Mammary epithelial cell (primary cell): ENCODE measurements at regions of chr2 and their contacts with region 1.

Region 1: GRCh38 chr2:219177552-219178376 is at the start of gene RETREG2:
- DNase-seq: peak; percentile 87
- H3K4me3 ChIP-seq: peak within 1 kb of the TSS; percentile 83 to 89 (median 86)
- H3K27ac ChIP-seq: peak within 1 kb of the TSS; percentile 92
- H3K4me1 ChIP-seq: peaks cover 28% of the 10 kb centered on the region
- H3K27me3 ChIP-seq: no peaks in the 10 kb centered on the region
- CTCF ChIP-seq: peak; percentile 22 to 38
- total RNA-seq, gene RETREG2: 56.1 to 73.5 TPM

Region 2: DNA sequence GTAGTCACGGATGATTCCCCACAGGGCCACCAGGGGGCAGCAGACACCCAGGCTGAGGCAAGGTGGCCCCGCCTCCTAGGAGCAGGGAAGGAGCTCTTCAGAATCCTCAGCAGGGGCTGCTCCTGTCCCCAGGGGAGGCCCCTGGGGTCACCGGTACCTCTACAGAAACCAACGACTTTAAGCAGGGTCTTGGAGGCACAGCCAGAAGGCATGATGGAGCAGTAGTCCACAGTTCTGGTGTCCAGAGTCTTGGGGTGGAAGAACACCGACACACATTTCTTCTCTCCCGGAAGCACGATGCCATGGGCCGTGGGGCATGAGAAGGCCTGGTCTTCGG is 148.0 kb before region 1 on chr2:
- CTCF ChIA-PET with region 1: no interaction called
- dilution Hi-C with region 1: no loop called
- in situ Hi-C with region 1: no loop called
- intact Hi-C with region 1: no loop called
- DNase-seq: peak; percentile 43
- H3K4me3 ChIP-seq: no peak overlapping the region
- H3K27ac ChIP-seq: no peak overlapping the region
- H3K4me1 ChIP-seq: no peaks in the 10 kb centered on the region
- H3K27me3 ChIP-seq: peaks cover 3% of the 10 kb centered on the region
- CTCF ChIP-seq: peak; percentile 90 to 97

Region 3: GRCh38 chr2:219160186-219161017 is 17.4 kb before region 1 on chr2 and contains the start of gene NHEJ1:
- CTCF ChIA-PET with region 1: no interaction called
- dilution Hi-C with region 1: no loop called
- in situ Hi-C with region 1: no loop called
- intact Hi-C with region 1: loop called (anchors 1 kb)
- DNase-seq: peak; percentile 88
- H3K4me3 ChIP-seq: peak within 1 kb of the TSS; percentile 74 to 91 (median 79)
- H3K27ac ChIP-seq: peak within 1 kb of the TSS; percentile 19
- H3K4me1 ChIP-seq: peaks cover 15% of the 10 kb centered on the region
- H3K27me3 ChIP-seq: no peaks in the 10 kb centered on the region
- CTCF ChIP-seq: peak; percentile 84 to 96
- total RNA-seq, gene NHEJ1: 10.4 to 13.3 TPM

Region 4: GRCh38 chr2:219206442-219207253 is 28.9 kb after region 1 on chr2 and contains the start of gene ZFAND2B:
- CTCF ChIA-PET with region 1: no interaction called
- dilution Hi-C with region 1: no loop called
- in situ Hi-C with region 1: loop called in 1 of 2 experiments (anchors 5 kb)
- intact Hi-C with region 1: loop called (anchors 1 kb)
- DNase-seq: peak; percentile 93
- H3K4me3 ChIP-seq: peak within 1 kb of the TSS; percentile 62 to 88 (median 74)
- H3K27ac ChIP-seq: peak within 1 kb of the TSS; percentile 36
- H3K4me1 ChIP-seq: peaks cover 17% of the 10 kb centered on the region
- H3K27me3 ChIP-seq: no peaks in the 10 kb centered on the region
- CTCF ChIP-seq: no peak
- total RNA-seq, gene ZFAND2B: 23.7 to 33.8 TPM

Region 5: GRCh38 chr2:219229305-219230058 is 51.7 kb after region 1 on chr2 and contains the starts of genes ANKZF1 and ATG9A:
- CTCF ChIA-PET with region 1: no interaction called
- dilution Hi-C with region 1: no loop called
- in situ Hi-C with region 1: no loop called
- intact Hi-C with region 1: loop called (anchors 1 kb)
- DNase-seq: peak; percentile 100
- H3K4me3 ChIP-seq: peak within 1 kb of the TSS; percentile 79 to 94 (median 92)
- H3K27ac ChIP-seq: peak within 1 kb of the TSS; percentile 93
- H3K4me1 ChIP-seq: peaks cover 17% of the 10 kb centered on the region
- H3K27me3 ChIP-seq: no peaks in the 10 kb centered on the region
- CTCF ChIP-seq: no peak
- total RNA-seq, gene ANKZF1: 29.2 to 52.9 TPM
- total RNA-seq, gene ATG9A: 60.4 to 74.5 TPM

Region 6: DNA sequence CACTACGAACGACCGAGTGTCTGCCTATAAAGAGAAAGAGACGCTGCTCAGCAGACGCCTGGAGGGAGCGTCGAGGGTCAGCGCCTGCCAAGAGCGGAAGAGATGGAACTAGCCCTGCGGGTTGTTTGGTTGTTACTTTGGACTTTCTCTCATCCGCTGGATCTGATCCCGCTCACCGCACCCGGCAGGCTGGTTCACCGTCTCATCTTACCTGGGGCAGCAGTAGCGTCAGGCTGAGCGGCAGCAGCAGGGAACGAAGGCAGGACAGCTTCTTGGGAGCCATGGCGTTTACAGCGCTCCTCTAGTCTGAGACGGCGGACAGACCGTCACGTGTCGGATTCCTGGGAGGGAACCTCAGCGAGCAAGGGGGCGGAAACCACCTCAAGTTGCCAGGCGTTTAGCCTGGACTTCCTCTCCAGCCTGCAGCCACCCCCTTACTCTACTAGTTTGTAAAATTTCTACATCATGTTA is 65.6 kb after region 1 on chr2:
- CTCF ChIA-PET with region 1: no interaction called
- dilution Hi-C with region 1: no loop called
- in situ Hi-C with region 1: no loop called
- intact Hi-C with region 1: no loop called
- DNase-seq: no peak
- H3K4me3 ChIP-seq: peak overlapping the region in 1 of 3 experiments; percentile 21
- H3K27ac ChIP-seq: no peak overlapping the region
- H3K4me1 ChIP-seq: peaks cover 26% of the 10 kb centered on the region
- H3K27me3 ChIP-seq: no peaks in the 10 kb centered on the region
- CTCF ChIP-seq: no peak

Region 7: GRCh38 chr2:219253753-219254590 is 76.2 kb after region 1 on chr2 and contains the start of gene TUBA4A:
- CTCF ChIA-PET with region 1: interaction called, 3 read pairs
- dilution Hi-C with region 1: loop called (anchors 5 kb)
- in situ Hi-C with region 1: no loop called
- intact Hi-C with region 1: loop called (anchors 1 kb)
- DNase-seq: peak; percentile 83
- H3K4me3 ChIP-seq: peak within 1 kb of the TSS; percentile 69 to 82 (median 81)
- H3K27ac ChIP-seq: peak within 1 kb of the TSS; percentile 76
- H3K4me1 ChIP-seq: peaks cover 48% of the 10 kb centered on the region
- H3K27me3 ChIP-seq: no peaks in the 10 kb centered on the region
- CTCF ChIP-seq: peak in 1 of 2 donors; percentile 12
- total RNA-seq, gene TUBA4A: 206 to 209 TPM

Region 8: GRCh38 chr2:219352448-219353023 is 174.8 kb after region 1 on chr2:
- CTCF ChIA-PET with region 1: no interaction called
- dilution Hi-C with region 1: no loop called
- in situ Hi-C with region 1: no loop called
- intact Hi-C with region 1: loop called (anchors 5 kb)
- DNase-seq: peak; percentile 51
- H3K4me3 ChIP-seq: no peak overlapping the region
- H3K27ac ChIP-seq: no peak overlapping the region
- H3K4me1 ChIP-seq: no peaks in the 10 kb centered on the region
- H3K27me3 ChIP-seq: no peaks in the 10 kb centered on the region
- CTCF ChIP-seq: peak; percentile 73 to 75